ENCODE measurements at regions of chrX and their contacts with region 1.

Region 1: DNA sequence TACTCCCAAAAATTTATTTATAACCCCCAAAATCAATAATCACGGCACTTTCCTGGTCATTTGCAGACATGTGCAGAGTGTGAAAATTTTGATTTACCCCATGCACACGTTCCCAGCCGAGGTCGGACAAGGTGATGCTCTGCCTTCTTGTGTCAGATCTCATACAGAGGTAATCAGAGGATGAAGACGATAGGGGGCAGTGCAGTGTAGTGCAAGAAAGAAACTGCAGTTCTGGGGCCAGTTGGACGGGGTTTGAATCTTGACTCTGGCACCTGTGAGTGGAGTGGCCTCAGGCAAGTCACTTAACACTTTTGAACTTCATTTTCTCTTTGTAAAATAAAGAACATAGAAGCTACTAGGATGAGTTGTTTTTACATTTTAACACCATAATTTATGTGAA is 88.4 kb downstream of the FRMPD3 start:
- DNase-seq: peak; percentile 60
- ATAC-seq: peak; percentile 70
- H3K4me3 Mint-ChIP-seq: no peak overlapping the region
- H3K27ac Mint-ChIP-seq: no peak overlapping the region
- H3K4me1 Mint-ChIP-seq: no peaks in the 10 kb centered on the region
- H3K27me3 Mint-ChIP-seq: peaks cover 3% of the 10 kb centered on the region

Region 2: DNA sequence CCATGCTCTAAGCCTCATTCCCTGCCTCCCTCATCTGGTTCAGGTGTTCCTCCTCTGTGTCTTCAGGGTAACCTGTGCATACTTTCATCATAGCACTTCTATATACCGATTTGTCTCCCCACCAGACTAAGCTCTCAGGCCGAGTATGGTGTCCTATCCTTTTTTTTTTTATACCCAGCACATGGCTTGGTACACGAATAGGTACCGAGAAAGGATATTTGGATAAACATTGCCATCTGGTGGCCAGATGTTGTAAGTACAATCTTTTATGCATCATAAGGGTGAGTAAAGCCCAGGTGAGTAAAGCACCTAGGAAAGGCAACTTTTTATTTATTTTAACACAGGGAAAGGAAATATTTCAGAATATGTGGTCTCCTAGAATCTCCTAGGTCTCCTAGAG is 356.2 kb after region 1 on chrX:
- CTCF ChIA-PET with region 1: no interaction called
- POLR2A ChIA-PET with region 1: no interaction called
- intact Hi-C with region 1: loop called in 1 of 2 experiments (anchors 2 kb)
- DNase-seq: peak; percentile 16
- ATAC-seq: peak; percentile 82
- H3K4me3 Mint-ChIP-seq: no peak overlapping the region
- H3K27ac Mint-ChIP-seq: no peak overlapping the region
- H3K4me1 Mint-ChIP-seq: no peaks in the 10 kb centered on the region
- H3K27me3 Mint-ChIP-seq: no peaks in the 10 kb centered on the region

Measured in activated CD4-positive, alpha-beta T cell treated with anti-CD3 and anti-CD28 coated beads for 36 hours (primary cell).